Activated B cell treated with CpG ODN at 0.5 μM for 24 hours (primary cell): ENCODE measurements at regions of chr6 and their contacts with region 1.

Region 1: DNA sequence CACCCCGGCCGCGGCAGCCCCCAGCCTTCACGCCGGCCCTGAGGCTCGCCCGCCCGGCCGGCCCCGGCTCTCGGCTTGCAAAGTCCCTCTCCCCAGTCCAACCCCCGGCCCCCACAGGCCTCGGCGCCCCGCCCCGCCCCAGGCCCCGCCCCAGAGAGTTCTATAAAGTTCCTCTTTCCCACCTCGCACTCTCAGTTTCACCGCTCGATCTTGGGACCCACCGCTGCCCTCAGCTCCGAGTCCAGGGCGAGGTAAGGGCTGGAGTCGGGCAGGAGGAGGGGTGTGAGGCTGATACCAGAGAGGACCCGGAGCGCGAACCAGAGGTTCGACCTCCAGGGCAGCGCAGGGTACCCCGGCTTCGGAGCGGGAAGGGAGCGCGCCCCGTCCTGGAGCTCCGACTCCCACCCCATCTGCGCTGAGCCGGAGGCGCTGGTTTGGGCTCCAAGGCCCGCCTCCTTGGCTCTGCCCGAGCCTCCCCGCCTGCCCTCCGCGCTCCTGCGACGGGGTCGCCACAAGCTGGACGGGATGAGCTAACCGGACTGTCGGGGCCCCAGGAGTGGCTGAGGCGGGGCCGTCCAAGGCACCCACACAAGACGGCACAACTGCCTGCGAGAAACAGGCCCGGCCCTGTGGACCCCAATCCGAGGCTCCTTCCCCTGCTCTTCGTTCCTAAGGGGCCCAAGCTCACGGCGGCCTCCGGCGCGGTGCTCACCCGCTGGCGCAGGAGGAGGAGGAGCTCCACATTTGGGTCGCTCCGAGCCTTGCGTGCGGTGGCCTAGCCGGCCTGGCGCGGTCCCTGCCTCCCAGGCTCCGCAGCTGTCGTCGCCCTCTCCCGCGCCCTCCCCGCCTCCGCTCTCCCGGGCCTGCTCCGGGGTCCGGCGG is at the start of gene IRF4:
- DNase-seq: no peak
- ATAC-seq: peak; percentile 74
- H3K4me3 Mint-ChIP-seq: peak within 1 kb of the TSS; percentile 98
- H3K27ac Mint-ChIP-seq: peak within 1 kb of the TSS; percentile 94
- H3K4me1 Mint-ChIP-seq: peaks cover 51% of the 10 kb centered on the region
- H3K27me3 Mint-ChIP-seq: no peaks in the 10 kb centered on the region
- CTCF ChIP-seq: no peak
- total RNA-seq, gene IRF4: 417 and 426 TPM in 2 replicates

Region 2: DNA sequence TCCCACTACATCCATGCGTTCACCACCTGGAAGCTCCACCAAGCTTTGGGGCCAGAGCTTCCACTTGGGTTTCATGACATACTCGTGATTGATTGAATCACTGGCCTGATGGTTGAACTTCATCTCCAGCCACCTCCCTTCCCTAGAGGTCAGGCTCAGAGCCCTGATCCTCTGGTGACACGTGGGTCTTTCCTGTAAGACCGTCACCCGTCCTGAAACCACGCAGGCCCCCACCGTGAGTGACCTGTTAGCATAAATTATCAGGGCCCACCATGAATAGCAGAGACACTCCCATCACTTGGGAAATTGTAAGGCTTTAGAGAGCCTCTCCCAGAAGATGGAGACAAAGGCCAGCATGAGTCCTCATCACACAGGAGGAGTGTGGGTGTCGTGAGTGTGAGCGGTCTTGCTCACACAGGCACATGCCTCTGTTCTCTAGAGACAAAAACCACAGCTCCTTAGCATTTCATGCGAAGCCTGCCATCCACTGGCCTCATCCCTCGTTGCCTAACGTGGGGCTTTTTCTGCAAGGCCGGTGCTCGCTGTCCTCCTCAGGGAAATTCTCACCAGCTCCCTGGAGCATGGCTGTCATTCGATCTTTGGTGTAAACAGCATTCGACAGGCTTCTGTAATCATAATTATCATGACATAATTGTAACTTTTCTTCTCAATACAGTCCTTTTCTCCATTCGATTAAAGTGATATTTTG is 164.6 kb before region 1 on chr6:
- CTCF ChIA-PET with region 1: interaction called, 37 read pairs
- POLR2A ChIA-PET with region 1: interaction called, 106 read pairs
- intact Hi-C with region 1: loop called (anchors 1 kb)
- DNase-seq: no peak
- ATAC-seq: peak; percentile 90
- H3K4me3 Mint-ChIP-seq: peak overlapping the region; percentile 55
- H3K27ac Mint-ChIP-seq: peak overlapping the region; percentile 80
- H3K4me1 Mint-ChIP-seq: peaks cover 67% of the 10 kb centered on the region
- H3K27me3 Mint-ChIP-seq: no peaks in the 10 kb centered on the region
- CTCF ChIP-seq: no peak

Region 3: GRCh38 chr6:313087-313486 is 78.7 kb before region 1 on chr6:
- CTCF ChIA-PET with region 1: no interaction called
- POLR2A ChIA-PET with region 1: interaction called, 37 read pairs
- intact Hi-C with region 1: no loop called
- DNase-seq: peak; percentile 15
- ATAC-seq: peak; percentile 78
- H3K4me3 Mint-ChIP-seq: peak overlapping the region; percentile 53
- H3K27ac Mint-ChIP-seq: peak overlapping the region; percentile 90
- H3K4me1 Mint-ChIP-seq: peaks cover 95% of the 10 kb centered on the region
- H3K27me3 Mint-ChIP-seq: no peaks in the 10 kb centered on the region
- CTCF ChIP-seq: no peak

Region 4: DNA sequence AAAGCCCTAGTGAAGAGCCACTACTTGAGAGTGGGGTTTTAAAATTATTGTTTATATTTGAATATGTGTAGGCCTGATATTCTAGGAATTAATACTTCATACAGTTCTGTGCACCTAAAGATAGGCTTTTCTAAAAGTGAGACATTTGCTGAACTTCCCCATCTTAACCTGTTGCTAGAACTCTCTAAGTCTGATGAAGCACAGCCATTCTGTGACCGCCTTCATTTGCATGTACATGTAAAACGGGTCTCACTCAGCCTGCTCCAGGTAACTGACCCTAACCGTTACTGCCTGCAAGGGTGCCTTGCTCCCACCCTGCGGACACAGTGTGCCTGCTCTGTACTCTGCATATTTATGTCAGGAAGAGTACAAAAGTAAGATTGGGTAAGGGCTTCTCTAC is 44.6 kb before region 1 on chr6:
- CTCF ChIA-PET with region 1: no interaction called
- POLR2A ChIA-PET with region 1: interaction called, 60 read pairs
- intact Hi-C with region 1: no loop called
- DNase-seq: no peak
- ATAC-seq: peak; percentile 92
- H3K4me3 Mint-ChIP-seq: peak overlapping the region; percentile 59
- H3K27ac Mint-ChIP-seq: peak overlapping the region; percentile 77
- H3K4me1 Mint-ChIP-seq: peaks cover 68% of the 10 kb centered on the region
- H3K27me3 Mint-ChIP-seq: no peaks in the 10 kb centered on the region
- CTCF ChIP-seq: no peak

Region 5: DNA sequence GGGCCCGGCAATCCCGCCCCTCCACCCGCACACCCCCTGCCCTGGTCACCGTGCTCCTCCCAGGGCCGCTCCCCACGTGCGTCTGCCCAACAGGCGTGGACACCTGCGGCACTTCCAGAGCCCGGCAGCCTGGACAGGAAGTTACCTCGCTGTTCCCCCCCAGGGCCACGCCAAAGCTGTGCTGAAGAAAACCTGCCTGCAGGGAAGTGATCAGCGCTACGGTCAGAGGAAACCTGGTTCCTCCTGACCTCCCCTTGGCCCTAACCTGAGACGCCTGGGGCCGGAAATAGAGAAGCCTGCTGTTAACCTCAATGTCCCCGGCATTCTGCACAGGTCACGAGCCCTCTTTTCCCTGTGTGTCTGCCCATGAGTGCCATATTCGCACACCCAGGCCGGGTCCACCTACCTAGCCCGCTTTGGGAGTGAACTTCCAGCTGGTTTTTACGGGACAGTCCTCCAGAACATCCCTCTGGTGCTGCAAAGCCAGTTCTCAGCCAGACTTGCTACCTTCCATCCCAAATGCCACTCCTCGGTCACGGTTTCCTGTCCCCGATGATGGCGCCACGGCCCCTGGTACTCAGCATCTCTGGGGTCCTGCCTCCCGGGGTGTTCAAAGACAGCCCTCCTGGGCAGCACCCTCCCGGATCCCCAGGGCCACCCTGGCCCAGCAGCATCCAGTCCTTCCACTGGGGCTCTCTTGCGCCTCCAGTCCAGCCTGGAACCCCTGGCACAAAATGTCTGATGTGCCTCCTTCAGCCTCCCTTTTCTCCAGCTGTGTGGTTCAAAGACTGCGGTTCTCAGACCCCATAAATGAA is 12.2 kb before region 1 on chr6:
- CTCF ChIA-PET with region 1: interaction called, 5 read pairs
- POLR2A ChIA-PET with region 1: interaction called, 84 read pairs
- intact Hi-C with region 1: loop called (anchors 1 kb)
- DNase-seq: no peak
- ATAC-seq: peak; percentile 38
- H3K4me3 Mint-ChIP-seq: peak overlapping the region; percentile 12
- H3K27ac Mint-ChIP-seq: peak overlapping the region; percentile 33
- H3K4me1 Mint-ChIP-seq: peaks cover 58% of the 10 kb centered on the region
- H3K27me3 Mint-ChIP-seq: no peaks in the 10 kb centered on the region
- CTCF ChIP-seq: no peak

Region 6: GRCh38 chr6:490251-491037 is 98.6 kb after region 1 on chr6:
- CTCF ChIA-PET with region 1: interaction called, 4 read pairs
- POLR2A ChIA-PET with region 1: interaction called, 39 read pairs
- intact Hi-C with region 1: loop called (anchors 1 kb)
- DNase-seq: no peak
- ATAC-seq: peak; percentile 35
- H3K4me3 Mint-ChIP-seq: peak overlapping the region; percentile 65
- H3K27ac Mint-ChIP-seq: peak overlapping the region; percentile 92
- H3K4me1 Mint-ChIP-seq: peaks cover 64% of the 10 kb centered on the region
- H3K27me3 Mint-ChIP-seq: no peaks in the 10 kb centered on the region
- CTCF ChIP-seq: no peak

Region 7: GRCh38 chr6:1396952-1397868 is 1005.4 kb after region 1 on chr6:
- CTCF ChIA-PET with region 1: no interaction called
- POLR2A ChIA-PET with region 1: no interaction called
- intact Hi-C with region 1: loop called (anchors 5 kb)
- DNase-seq: peak; percentile 67
- ATAC-seq: peak; percentile 58
- H3K4me3 Mint-ChIP-seq: no peak overlapping the region
- H3K27ac Mint-ChIP-seq: no peak overlapping the region
- H3K4me1 Mint-ChIP-seq: peaks cover 8% of the 10 kb centered on the region
- H3K27me3 Mint-ChIP-seq: peaks cover 48% of the 10 kb centered on the region
- CTCF ChIP-seq: peak; percentile 90